CD8-positive, alpha-beta memory T cell (primary cell): ENCODE measurements at regions of chr12 and their contacts with region 1.

Region 1: DNA sequence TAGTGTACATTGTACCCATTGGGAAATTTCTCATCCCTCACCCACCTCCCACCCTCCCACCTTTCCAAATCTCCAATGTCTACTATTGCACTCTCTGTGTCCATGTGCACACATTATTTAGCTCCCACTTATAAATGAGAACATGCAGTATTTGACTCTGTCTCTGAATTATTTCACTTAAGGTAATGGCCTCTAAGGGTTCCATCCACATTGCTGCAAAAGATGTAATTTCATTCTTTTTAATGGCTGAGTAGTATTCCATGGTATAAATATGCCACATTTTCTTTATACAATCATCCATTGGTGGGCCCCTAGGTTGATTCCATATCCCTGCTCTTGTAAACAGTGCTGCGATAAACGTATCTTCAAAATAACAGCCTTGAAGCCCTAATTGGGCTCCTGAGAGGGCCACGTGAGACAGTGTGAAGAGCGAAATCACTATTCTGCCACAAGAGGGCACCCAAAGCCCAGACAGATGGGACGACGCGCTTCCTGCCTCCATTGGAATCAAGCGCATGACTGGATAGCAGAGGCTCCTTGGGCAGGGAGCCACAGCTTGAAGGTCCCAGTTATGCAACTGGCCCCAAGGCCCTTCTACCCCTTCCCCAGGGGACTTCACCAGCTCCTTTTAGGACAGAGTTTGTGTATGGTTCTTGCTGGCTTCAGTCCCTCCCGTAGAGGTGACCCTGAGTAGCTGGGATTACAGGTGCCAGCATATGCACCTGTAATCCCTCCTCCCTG is 21.3 kb upstream of the CD27 start:
- DNase-seq: peak; percentile 60 to 87 (median 82)
- H3K4me3 ChIP-seq: peak overlapping the region; percentile 35
- H3K4me3 Mint-ChIP-seq: peak overlapping the region in 4 of 7 donors; percentile 5 to 53 (median 24)
- H3K27ac ChIP-seq: no peak overlapping the region
- H3K27ac Mint-ChIP-seq: peak overlapping the region; percentile 41 to 90 (median 70)
- H3K4me1 ChIP-seq: peaks cover 46% of the 10 kb centered on the region
- H3K4me1 Mint-ChIP-seq: peaks cover 36 to 43% (median 40%) of the 10 kb centered on the region in 3 donors
- H3K27me3 ChIP-seq: no peaks in the 10 kb centered on the region
- H3K27me3 Mint-ChIP-seq: peaks cover 0 to 4% of the 10 kb centered on the region in 2 donors

Region 2: DNA sequence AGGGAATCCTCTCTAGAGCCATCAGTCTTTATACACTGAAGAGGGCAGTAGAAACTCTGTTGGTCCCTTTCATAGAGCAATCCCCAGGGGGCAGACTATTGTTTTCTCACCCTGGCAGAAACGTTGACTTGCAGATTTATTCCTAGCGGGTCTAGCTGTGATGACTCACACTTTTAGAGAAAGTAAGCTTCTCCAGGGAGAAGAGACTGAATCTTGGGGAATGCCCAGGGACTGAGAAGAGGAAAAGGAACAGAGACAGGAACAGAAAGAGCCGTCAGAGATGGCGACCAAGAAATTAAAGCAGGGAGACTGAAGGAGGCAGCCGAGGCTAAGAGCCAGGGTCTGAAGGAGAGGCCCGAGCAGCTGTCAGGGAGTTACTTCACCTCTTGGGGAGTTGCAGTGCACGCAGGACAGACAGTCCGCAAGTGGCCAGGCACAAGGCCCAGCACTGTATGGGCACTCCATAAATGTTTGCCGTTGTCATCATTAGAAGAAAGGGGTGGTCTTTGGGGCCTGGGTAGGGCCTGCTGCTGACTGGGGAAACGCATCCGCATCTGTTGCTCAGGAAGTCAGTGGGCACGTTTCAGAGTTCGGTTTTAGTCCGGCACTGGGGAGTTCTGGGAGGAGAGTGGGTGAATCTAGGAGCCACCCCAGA is 100.0 kb before region 1 on chr12:
- CTCF ChIA-PET with region 1: interaction called, 16 read pairs
- POLR2A ChIA-PET with region 1: no interaction called
- DNase-seq: peak in 4 of 5 donors; percentile 28 to 67 (median 52)
- H3K4me3 ChIP-seq: peak overlapping the region; percentile 22
- H3K4me3 Mint-ChIP-seq: peak overlapping the region; percentile 63 to 88 (median 83)
- H3K27ac ChIP-seq: no peak overlapping the region
- H3K27ac Mint-ChIP-seq: peak overlapping the region; percentile 81 to 96 (median 93)
- H3K4me1 ChIP-seq: peaks cover 34% of the 10 kb centered on the region
- H3K4me1 Mint-ChIP-seq: peaks cover 50 to 58% (median 55%) of the 10 kb centered on the region in 3 donors
- H3K27me3 ChIP-seq: no peaks in the 10 kb centered on the region
- H3K27me3 Mint-ChIP-seq: no peaks in the 10 kb centered on the region

Region 3: GRCh38 chr12:6407236-6407954 is 16.0 kb before region 1 on chr12:
- CTCF ChIA-PET with region 1: no interaction called
- POLR2A ChIA-PET with region 1: no interaction called
- DNase-seq: no peak
- H3K4me3 ChIP-seq: no peak overlapping the region
- H3K4me3 Mint-ChIP-seq: no peak overlapping the region
- H3K27ac ChIP-seq: no peak overlapping the region
- H3K27ac Mint-ChIP-seq: no peak overlapping the region
- H3K4me1 ChIP-seq: no peaks in the 10 kb centered on the region
- H3K4me1 Mint-ChIP-seq: no peaks in the 10 kb centered on the region
- H3K27me3 ChIP-seq: no peaks in the 10 kb centered on the region
- H3K27me3 Mint-ChIP-seq: peaks cover 4 to 7% of the 10 kb centered on the region in 2 donors

Region 4: GRCh38 chr12:6434205-6435140 is 11.0 kb after region 1 on chr12:
- CTCF ChIA-PET with region 1: interaction called, 56 read pairs
- POLR2A ChIA-PET with region 1: no interaction called
- DNase-seq: peak in 4 of 5 donors; percentile 17 to 66 (median 44)
- H3K4me3 ChIP-seq: no peak overlapping the region
- H3K4me3 Mint-ChIP-seq: peak overlapping the region; percentile 31 to 73 (median 63)
- H3K27ac ChIP-seq: peak overlapping the region; percentile 11
- H3K27ac Mint-ChIP-seq: peak overlapping the region; percentile 79 to 96 (median 89)
- H3K4me1 ChIP-seq: peaks cover 43% of the 10 kb centered on the region
- H3K4me1 Mint-ChIP-seq: peaks cover 40 to 43% (median 42%) of the 10 kb centered on the region in 3 donors
- H3K27me3 ChIP-seq: no peaks in the 10 kb centered on the region
- H3K27me3 Mint-ChIP-seq: no peaks in the 10 kb centered on the region

Region 5: GRCh38 chr12:6451348-6452244 is 28.2 kb after region 1 on chr12 and contains the start of gene TAPBPL:
- CTCF ChIA-PET with region 1: interaction called, 56 read pairs
- POLR2A ChIA-PET with region 1: interaction called, 7 read pairs
- DNase-seq: peak; percentile 77 to 90 (median 86)
- H3K4me3 ChIP-seq: peak within 1 kb of the TSS; percentile 96
- H3K4me3 Mint-ChIP-seq: peak within 1 kb of the TSS; percentile 94 to 100 (median 99)
- H3K27ac ChIP-seq: peak within 1 kb of the TSS; percentile 93
- H3K27ac Mint-ChIP-seq: peak within 1 kb of the TSS; percentile 91 to 100 (median 98)
- H3K4me1 ChIP-seq: peaks cover 59% of the 10 kb centered on the region
- H3K4me1 Mint-ChIP-seq: peaks cover 71 to 82% (median 76%) of the 10 kb centered on the region in 3 donors
- H3K27me3 ChIP-seq: no peaks in the 10 kb centered on the region
- H3K27me3 Mint-ChIP-seq: no peaks in the 10 kb centered on the region
- total RNA-seq, gene TAPBPL: 29.1 to 32.0 TPM

Region 6: GRCh38 chr12:6470375-6471163 is 47.1 kb after region 1 on chr12 and contains the start of gene VAMP1:
- CTCF ChIA-PET with region 1: interaction called, 95 read pairs
- POLR2A ChIA-PET with region 1: interaction called, 9 read pairs
- DNase-seq: peak; percentile 94 to 97 (median 95)
- H3K4me3 ChIP-seq: peak within 1 kb of the TSS; percentile 86
- H3K4me3 Mint-ChIP-seq: peak within 1 kb of the TSS; percentile 89 to 97 (median 93)
- H3K27ac ChIP-seq: peak within 1 kb of the TSS; percentile 63
- H3K27ac Mint-ChIP-seq: peak within 1 kb of the TSS; percentile 90 to 97 (median 96)
- H3K4me1 ChIP-seq: peaks cover 35% of the 10 kb centered on the region
- H3K4me1 Mint-ChIP-seq: peaks cover 46 to 52% (median 47%) of the 10 kb centered on the region in 3 donors
- H3K27me3 ChIP-seq: no peaks in the 10 kb centered on the region
- H3K27me3 Mint-ChIP-seq: no peaks in the 10 kb centered on the region
- total RNA-seq, gene VAMP1: 26.7 to 29.6 TPM

Region 7: GRCh38 chr12:6540181-6540877 is 116.9 kb after region 1 on chr12:
- CTCF ChIA-PET with region 1: interaction called, 107 read pairs
- POLR2A ChIA-PET with region 1: interaction called, 12 read pairs
- DNase-seq: peak; percentile 21 to 63 (median 33)
- H3K4me3 ChIP-seq: no peak overlapping the region
- H3K4me3 Mint-ChIP-seq: peak overlapping the region in 6 of 7 donors; percentile 16 to 73 (median 66)
- H3K27ac ChIP-seq: no peak overlapping the region
- H3K27ac Mint-ChIP-seq: peak overlapping the region in 7 of 8 donors; percentile 12 to 95 (median 77)
- H3K4me1 ChIP-seq: peaks cover 62% of the 10 kb centered on the region
- H3K4me1 Mint-ChIP-seq: peaks cover 40 to 48% (median 47%) of the 10 kb centered on the region in 3 donors
- H3K27me3 ChIP-seq: no peaks in the 10 kb centered on the region
- H3K27me3 Mint-ChIP-seq: peaks cover 0 to 1% of the 10 kb centered on the region in 2 donors

Region 8: DNA sequence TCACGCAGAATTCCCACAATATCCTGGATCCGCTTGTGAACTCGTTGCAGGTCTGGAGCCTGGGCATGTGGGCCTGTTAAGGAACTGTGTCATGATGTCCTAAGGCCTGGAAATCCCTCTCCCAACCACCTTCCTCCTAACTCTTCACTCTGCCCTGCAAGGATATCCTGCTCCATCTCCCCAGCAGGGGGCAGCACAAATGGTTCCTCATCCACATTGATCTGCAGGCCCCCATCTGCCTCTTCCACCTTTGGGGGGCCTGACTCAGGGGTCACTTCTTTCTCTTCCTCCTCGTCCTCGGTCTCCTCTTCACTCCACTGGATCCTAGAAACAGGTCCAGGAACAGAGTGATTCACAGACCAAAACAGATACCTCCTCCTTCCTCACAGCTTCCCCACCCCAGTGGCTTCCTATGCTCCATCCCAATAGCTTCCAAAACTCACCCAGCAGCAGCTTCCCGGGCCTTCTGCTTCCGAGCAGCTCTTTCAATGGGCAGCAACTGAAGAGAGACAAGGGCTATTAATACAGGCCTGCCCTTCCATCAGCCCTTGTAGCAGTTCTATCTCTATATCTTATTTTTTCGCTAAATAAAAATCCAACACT is 140.1 kb after region 1 on chr12:
- CTCF ChIA-PET with region 1: no interaction called
- POLR2A ChIA-PET with region 1: no interaction called
- DNase-seq: peak; percentile 44 to 76 (median 61)
- H3K4me3 ChIP-seq: no peak overlapping the region
- H3K4me3 Mint-ChIP-seq: peak overlapping the region in 1 of 7 donors; percentile 87
- H3K27ac ChIP-seq: no peak overlapping the region
- H3K27ac Mint-ChIP-seq: peak overlapping the region; percentile 26 to 95 (median 67)
- H3K4me1 ChIP-seq: peaks cover 25% of the 10 kb centered on the region
- H3K4me1 Mint-ChIP-seq: peaks cover 36 to 43% (median 39%) of the 10 kb centered on the region in 3 donors
- H3K27me3 ChIP-seq: no peaks in the 10 kb centered on the region
- H3K27me3 Mint-ChIP-seq: peaks cover 0 to 2% of the 10 kb centered on the region in 2 donors